ENCODE measurements at regions of chrX and their contacts with region 1.

Region 1: GRCh38 chrX:109872021-109872732 is 130.7 kb upstream of the TMEM164 start:
- DNase-seq: peak; percentile 90
- H3K4me3 ChIP-seq: no peak overlapping the region
- H3K27ac ChIP-seq: peak overlapping the region; percentile 11
- H3K27me3 ChIP-seq: no peaks in the 10 kb centered on the region
- CTCF ChIP-seq: no peak

Region 2: DNA sequence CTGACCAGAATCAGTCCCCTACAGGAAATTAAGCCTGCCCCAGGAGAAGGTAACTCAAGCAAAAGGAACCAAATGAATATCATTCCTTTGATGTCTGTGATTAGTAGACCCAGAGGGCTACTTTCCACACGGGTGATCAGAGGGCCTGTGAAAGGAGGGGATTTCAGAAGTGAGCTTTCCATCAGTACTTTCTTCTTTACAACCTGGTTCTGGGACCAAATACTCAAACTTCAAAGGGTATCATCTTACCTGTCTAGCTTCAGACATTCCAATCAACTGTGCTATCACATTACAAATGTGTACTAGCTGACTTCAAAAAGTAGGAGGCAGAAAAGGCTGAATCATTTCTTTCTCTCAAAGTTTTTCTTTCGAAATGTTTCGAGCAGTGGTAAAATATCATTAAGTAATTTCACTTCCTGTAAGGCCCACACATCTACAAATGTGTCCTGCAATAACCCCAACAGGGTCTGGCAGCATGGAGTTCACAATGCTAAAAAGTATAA is 163.0 kb before region 1 on chrX:
- CTCF ChIA-PET with region 1: interaction called, 21 read pairs
- POLR2A ChIA-PET with region 1: interaction called, 4 read pairs
- DNase-seq: no peak
- H3K4me3 ChIP-seq: no peak overlapping the region
- H3K27ac ChIP-seq: peak overlapping the region; percentile 39
- H3K27me3 ChIP-seq: no peaks in the 10 kb centered on the region
- CTCF ChIP-seq: 0 out of 2 replicates have a peak, but pooled peaks have one; percentile 7

Region 3: DNA sequence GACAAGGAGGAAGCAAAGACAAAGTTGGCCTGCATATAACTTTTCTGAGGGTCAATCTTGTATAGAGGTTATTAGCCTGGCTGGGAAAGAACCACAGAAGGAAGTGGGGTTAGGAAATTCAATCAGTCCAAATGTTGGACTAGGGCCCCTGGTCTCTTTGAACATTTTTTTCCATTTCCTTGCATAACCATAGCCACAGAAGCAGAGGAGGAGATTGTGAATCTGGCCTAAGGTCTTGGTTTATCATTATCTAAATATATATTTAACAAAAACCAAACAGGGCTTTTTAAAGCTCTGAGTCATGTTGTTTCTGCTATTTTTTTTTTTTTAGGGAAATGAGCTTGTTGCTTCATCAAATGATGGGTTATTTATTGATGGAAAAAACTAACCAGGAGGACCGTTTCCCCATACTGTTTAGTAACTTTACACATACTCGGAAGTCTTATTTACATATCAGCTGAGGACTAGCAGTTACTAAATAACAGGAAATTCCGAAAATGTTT is 41.4 kb before region 1 on chrX:
- CTCF ChIA-PET with region 1: no interaction called
- POLR2A ChIA-PET with region 1: interaction called, 16 read pairs
- DNase-seq: peak; percentile 34
- H3K4me3 ChIP-seq: no peak overlapping the region
- H3K27ac ChIP-seq: peak overlapping the region; percentile 31
- H3K27me3 ChIP-seq: no peaks in the 10 kb centered on the region
- CTCF ChIP-seq: no peak

Measured in AG04450 (cell line).